Right ventricle myocardium inferior (tissue), 1 donor: ENCODE measurements at regions of chr9 and their contacts with region 1.

Region 1: DNA sequence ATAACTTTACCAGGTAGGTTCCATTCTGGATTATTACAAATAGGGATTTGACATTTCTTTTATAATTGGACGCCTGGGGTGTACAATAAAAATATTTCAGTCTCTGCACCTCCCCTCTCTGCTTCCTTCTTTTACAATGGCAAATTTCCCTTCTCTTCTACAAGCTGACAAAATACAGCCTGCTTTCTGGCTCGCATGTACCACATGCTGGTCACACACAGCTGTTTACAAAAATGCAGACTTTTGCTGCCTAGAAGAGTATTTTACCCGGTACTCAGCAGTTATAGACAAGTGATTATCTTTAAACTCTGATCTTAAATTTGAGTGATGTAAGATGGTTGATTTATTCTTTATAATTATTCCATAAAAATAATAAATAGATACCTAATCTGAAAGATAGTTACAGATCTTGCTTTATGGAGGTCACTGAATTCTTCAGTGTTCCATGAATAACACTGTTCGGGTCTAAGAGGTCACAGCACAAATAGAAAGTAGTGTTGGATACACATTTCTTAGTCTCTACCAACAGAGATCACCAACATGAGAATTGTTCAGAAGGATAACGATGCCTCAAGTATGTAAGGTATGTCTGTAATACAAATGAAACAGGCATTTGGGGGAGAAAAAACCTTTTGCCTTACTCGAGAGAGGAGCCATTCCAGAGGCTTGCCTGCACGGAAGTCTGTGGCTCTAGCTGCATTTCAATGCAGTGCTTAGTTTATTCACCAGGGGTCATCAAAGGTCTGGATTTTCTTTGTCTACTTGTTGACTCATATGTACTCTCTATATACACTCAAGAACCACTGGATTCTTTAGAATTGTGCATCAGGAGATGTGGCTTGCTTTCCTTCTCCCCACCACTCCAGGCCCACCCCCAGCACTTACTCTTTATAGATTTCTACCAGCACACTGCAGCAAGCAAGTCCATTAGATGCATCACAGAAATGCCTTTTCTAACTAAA is 206.6 kb upstream of the RFX3 start:
- DNase-seq: no peak
- ATAC-seq: peak; percentile 97

Region 2: DNA sequence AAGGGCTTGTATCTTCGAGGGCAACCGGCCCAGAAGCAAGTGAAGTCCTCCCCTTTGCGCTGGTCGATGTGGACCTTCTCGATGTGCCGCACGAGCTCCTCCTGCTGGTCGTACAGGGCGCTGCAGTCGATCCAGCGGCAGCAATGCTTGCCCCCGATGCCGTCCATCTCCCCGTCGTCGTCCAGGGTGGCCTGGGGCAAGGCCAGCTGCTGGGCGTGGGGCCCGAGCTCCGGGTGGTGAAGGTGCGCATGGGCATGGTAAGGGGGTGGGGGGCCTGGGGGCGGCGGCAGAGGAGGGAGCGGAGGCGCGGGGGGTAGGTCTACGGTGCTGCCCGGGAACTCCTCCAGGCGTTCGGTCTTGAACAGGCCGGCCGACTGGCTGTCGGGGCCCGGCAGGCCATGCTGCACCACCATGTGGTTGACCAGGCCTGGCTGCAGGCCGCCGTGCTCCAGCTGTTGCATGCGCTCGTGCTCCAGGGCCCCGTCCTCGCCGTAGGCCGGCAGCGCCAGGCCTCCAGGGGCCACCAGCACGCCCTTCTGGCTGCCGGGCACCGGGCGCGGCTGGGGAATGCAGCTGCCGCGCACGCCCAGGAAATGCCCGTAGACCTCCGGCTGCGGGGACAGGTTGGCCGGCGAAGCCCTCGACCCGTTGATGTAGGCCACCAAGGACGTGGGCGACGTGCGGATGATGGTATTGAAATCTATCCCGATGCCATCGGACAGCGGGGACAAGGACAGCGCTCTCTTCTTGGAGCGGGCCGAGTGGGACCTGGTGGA is 385.7 kb after region 1 on chr9:
- intact Hi-C with region 1: loop called (anchors 10 kb)
- DNase-seq: peak; percentile 65
- ATAC-seq: no peak

Region 3: GRCh38 chr9:4228606-4229005 is 496.2 kb after region 1 on chr9:
- intact Hi-C with region 1: loop called (anchors 5 kb)
- DNase-seq: no peak
- ATAC-seq: peak; percentile 76

Region 4: GRCh38 chr9:4339357-4339756 is 607.0 kb after region 1 on chr9:
- intact Hi-C with region 1: loop called (anchors 5 kb)
- DNase-seq: peak; percentile 89
- ATAC-seq: no peak

Region 5: DNA sequence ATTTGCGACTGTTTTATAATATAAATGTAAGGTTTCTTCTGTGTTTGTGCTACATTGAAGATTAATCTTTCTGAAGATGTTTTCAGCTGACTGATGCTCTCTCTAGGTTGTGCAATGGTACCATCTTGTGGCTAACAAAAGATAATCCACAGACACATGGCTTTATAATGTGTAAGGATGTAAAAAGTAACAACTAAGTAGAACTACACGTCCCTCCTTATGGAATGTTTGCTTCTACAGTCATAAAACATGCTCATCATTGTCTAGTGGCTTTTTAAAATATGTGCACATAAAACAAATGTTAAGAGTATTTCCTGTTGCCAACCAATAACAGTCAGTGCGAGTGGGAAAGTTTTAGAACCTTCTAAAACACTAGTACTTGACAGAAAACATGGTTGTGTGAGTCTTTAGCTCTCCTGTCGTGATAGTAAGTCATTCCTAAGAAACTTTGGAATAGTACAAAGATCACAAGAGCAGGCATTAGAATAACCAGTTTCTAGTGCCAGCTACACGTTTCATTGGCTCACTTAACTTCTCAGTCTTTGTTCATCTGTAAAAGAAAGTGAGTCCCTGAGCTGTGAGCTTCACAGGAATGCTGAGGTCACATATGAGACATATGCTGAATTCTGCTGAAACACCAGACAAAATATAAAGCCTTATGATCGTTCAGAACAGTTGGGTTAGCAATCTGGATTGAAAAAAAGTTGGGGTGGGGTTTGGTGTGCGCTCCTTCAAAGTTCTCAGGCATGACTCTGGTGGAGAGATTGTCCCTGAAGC is 643.3 kb after region 1 on chr9:
- intact Hi-C with region 1: loop called (anchors 5 kb)
- DNase-seq: no peak
- ATAC-seq: no peak